Stomach (tissue), 19 donors: ENCODE measurements at regions of chr10 and their contacts with region 1.

Region 1: GRCh38 chr10:122342293-122343134 is 32.0 kb upstream of the PLEKHA1 start:
- DNase-seq: peak in 1 of 2 donors; percentile 73
- H3K4me3 ChIP-seq: no peak overlapping the region
- H3K27ac ChIP-seq: peak overlapping the region in 2 of 5 donors; percentile 55 to 61
- H3K4me1 ChIP-seq: peaks cover 0 to 16% (median 0%) of the 10 kb centered on the region in 4 donors
- H3K27me3 ChIP-seq: no peaks in the 10 kb centered on the region
- CTCF ChIP-seq: peak in 4 of 7 experiments; percentile 68 to 81 (median 74)
- EP300 ChIP-seq: no peak
- POLR2A ChIP-seq: no peak

Region 2: DNA sequence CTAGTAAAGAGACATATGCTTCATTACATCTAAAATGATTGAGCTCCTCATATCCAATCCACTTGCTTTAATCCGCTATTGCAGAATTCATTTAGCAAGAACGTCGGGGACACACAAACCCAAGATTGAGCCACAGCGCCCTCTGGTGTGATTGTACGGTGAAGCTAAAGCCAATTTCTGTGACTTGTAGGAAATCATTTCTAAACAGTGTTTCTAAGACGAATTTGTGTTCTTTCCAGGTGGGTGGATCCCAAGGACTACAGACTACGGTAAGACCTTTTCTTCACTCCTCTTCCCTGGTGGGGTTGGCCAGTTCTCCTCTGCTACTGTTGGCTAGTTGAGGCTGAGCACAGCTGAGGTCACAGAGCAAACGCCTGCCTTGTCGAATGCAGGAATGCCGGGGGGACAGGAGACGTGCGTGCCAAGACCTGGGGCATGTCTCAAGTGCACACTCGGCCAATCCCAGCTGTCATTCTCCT is 223.3 kb after region 1 on chr10:
- intact Hi-C with region 1: loop called (anchors 10 kb)
- DNase-seq: peak; percentile 78 to 93
- H3K4me3 ChIP-seq: peak overlapping the region in 3 of 4 donors; percentile 10 to 23 (median 22)
- H3K27ac ChIP-seq: no peak overlapping the region
- H3K4me1 ChIP-seq: peaks cover 0 to 8% (median 6%) of the 10 kb centered on the region in 4 donors
- H3K27me3 ChIP-seq: peaks cover 0 to 38% (median 6%) of the 10 kb centered on the region in 3 donors
- CTCF ChIP-seq: peak in 5 of 7 experiments; percentile 62 to 79 (median 68)
- EP300 ChIP-seq: no peak
- POLR2A ChIP-seq: no peak